Activated T-helper 2 cell treated with anti-CD3 and anti-CD28 coated beads, Interferon-gamma antibody, Interleukin-2, Interleukin-4, amounts not matched to agents 10 μg/mL and 5 μg/mL and 100 μg/mL, durations not matched to agents 14 hours and 24 hours and 36 hours (primary cell): ENCODE measurements at regions of chr19 and their contacts with region 1.

Region 1: DNA sequence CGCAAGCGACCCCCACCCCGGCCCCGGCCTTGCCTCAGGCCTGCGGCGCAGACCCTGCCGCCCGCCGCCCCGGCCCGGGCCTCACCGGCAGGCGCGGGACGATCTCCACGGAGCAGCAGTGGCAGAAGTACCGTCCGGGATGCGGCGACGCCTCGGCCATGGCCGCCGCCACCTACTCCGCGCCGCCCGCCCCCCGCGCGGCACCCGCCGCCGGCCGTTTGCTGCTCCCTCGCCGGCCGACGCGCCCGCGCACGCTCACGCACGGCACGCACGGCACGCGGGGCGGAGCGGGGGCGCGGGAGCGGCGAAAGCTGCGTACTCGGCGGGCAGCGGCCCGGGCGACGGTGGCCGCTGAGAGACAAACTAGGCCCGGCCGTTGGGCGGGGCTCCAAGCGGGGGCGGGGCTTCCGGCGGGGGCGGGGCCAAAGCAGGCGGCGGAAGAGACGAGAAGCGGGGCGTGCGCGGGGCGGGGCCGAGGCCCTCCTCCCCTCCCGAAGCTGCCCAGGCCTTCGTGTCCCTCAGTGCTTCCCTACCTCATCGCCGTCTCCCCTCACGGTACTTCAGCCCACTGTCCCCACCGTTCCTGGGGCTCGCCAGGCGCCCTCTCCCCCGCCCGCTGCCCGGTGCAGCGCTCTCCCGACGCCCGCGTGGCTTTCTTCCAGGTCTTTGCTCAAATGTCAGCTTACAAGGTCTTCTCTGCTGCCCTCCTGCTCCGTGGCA is at the start of gene RNF126:
- DNase-seq: peak; percentile 84
- H3K4me3 Mint-ChIP-seq: peak within 1 kb of the TSS; percentile 97
- H3K27ac Mint-ChIP-seq: peak within 1 kb of the TSS; percentile 92
- H3K4me1 Mint-ChIP-seq: peaks cover 14% of the 10 kb centered on the region
- H3K27me3 Mint-ChIP-seq: no peaks in the 10 kb centered on the region
- total RNA-seq, gene RNF126: 83.2 and 89.4 TPM in 2 replicates

Region 2: DNA sequence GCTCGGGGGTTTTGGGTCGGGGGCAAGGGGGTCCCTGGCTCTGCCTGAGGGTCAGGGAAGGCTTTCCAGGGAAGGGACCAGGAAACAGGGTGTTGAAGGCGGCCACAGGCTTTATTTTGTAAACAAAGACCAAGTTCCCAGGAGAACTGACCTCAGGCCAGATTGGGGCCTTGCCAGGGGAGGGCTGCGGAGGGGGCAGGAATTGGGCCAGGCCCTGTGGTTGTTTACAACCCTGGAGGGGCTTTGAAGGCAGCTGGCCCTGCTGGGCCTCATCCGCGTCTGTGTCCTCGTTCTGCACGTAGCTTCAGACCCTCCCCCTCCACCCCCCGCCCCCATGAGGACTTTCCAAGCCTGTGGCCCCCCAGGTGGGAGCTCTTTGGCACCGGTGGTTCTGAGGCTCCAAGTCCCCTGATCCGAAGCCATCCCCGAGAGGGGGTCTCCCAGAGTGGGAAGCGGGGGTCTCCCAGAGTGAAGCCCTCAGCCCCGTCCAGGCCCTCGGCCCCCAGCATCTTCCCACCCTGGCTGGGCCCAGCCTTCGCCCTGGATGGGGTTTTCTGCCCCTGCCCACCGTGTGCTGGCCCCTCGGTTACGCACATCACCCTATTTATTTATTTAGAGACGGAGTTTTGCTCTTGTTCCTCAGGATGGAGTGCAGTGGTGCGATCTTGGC is 104.2 kb before region 1 on chr19:
- intact Hi-C with region 1: no loop called
- DNase-seq: no peak
- H3K4me3 Mint-ChIP-seq: no peak overlapping the region
- H3K27ac Mint-ChIP-seq: no peak overlapping the region
- H3K4me1 Mint-ChIP-seq: no peaks in the 10 kb centered on the region
- H3K27me3 Mint-ChIP-seq: no peaks in the 10 kb centered on the region

Region 3: DNA sequence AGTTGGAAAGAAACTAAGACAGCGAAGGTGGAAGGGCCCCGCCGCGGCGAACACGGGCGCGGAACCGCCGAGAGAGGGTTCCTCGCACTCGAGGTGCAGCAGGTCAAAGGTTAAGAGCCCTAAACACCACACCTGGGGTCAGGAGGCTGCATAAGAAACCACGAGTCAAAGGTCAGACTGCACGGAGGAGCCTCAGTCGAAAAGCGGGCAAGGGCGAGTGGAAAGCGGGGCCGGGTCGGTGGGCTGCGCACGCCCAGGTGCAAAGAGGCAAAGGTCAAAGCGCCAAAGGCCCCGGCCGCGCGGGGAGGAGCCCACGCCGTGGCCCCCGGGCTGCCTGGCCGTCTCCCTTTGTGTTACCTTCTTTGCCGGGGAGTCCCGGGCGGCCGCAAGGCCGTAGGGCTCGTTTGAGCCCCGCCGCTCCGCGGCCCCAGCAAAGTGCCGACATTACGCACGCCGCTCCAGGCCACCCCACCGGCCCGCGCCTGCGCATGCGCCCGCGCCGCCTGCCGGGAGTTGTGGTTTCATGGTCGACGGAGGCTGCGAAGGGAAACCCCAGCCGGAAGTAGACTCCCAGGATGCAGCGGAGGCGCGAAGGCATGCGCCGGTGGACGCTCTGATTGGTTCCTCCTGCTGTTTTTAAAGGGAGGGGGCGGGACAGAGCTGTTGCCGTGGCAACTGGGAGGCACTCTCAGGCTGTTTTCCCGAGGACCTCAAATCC is 29.9 kb before region 1 on chr19 and contains the start of gene POLRMT:
- intact Hi-C with region 1: loop called (anchors 2 kb)
- DNase-seq: peak; percentile 95
- H3K4me3 Mint-ChIP-seq: peak within 1 kb of the TSS; percentile 97
- H3K27ac Mint-ChIP-seq: peak within 1 kb of the TSS; percentile 88
- H3K4me1 Mint-ChIP-seq: peaks cover 10% of the 10 kb centered on the region
- H3K27me3 Mint-ChIP-seq: no peaks in the 10 kb centered on the region
- total RNA-seq, gene POLRMT: 90.1 and 94.7 TPM in 2 replicates

Region 4: GRCh38 chr19:703651-704446 is 40.7 kb after region 1 on chr19:
- intact Hi-C with region 1: loop called (anchors 2 kb)
- DNase-seq: peak; percentile 61
- H3K4me3 Mint-ChIP-seq: no peak overlapping the region
- H3K27ac Mint-ChIP-seq: no peak overlapping the region
- H3K4me1 Mint-ChIP-seq: peaks cover 2% of the 10 kb centered on the region
- H3K27me3 Mint-ChIP-seq: peaks cover 18% of the 10 kb centered on the region

Region 5: GRCh38 chr19:796692-797527 is 133.8 kb after region 1 on chr19 and contains the start of gene PTBP1:
- intact Hi-C with region 1: loop called (anchors 2 kb)
- DNase-seq: peak; percentile 100
- H3K4me3 Mint-ChIP-seq: peak within 1 kb of the TSS; percentile 91
- H3K27ac Mint-ChIP-seq: peak within 1 kb of the TSS; percentile 93
- H3K4me1 Mint-ChIP-seq: peaks cover 20% of the 10 kb centered on the region
- H3K27me3 Mint-ChIP-seq: no peaks in the 10 kb centered on the region
- total RNA-seq, gene PTBP1: 735 and 739 TPM in 2 replicates

Region 6: DNA sequence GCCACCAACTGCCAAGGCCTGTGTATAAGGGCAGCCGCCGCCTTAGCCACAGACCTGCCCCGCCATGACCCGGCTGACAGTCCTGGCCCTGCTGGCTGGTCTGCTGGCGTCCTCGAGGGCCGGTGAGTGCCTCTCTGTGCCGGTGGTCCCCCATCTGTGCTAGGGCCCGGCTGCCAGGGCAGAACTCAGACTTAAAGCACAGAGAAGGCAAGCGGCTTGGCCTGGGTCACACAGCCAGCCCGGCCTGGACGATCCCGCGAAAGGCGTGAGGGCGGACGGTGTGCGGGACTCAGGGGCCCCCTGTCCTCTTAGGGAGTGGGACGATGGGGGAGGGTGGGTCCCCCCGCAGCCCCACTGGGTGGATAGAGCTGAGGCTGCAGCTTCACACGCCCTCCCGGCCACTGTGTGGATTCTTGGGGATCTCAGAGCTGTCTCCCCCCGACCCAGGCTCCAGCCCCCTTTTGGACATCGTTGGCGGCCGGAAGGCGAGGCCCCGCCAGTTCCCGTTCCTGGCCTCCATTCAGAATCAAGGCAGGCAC is 164.7 kb after region 1 on chr19 and contains the start of gene AZU1:
- intact Hi-C with region 1: no loop called
- DNase-seq: no peak
- H3K4me3 Mint-ChIP-seq: no peak within 1 kb of the TSS
- H3K27ac Mint-ChIP-seq: no peak within 1 kb of the TSS
- H3K4me1 Mint-ChIP-seq: no peaks in the 10 kb centered on the region
- H3K27me3 Mint-ChIP-seq: peaks cover 9% of the 10 kb centered on the region
- total RNA-seq, gene AZU1: not detected in 2 replicates

Region 7: GRCh38 chr19:970695-971094 is 307.6 kb after region 1 on chr19:
- intact Hi-C with region 1: no loop called
- DNase-seq: no peak
- H3K4me3 Mint-ChIP-seq: no peak overlapping the region
- H3K27ac Mint-ChIP-seq: no peak overlapping the region
- H3K4me1 Mint-ChIP-seq: no peaks in the 10 kb centered on the region
- H3K27me3 Mint-ChIP-seq: no peaks in the 10 kb centered on the region